AG04450 (cell line): ENCODE measurements at regions of chrX and their contacts with region 1.

Region 1: GRCh38 chrX:134528960-134529359 is 69.0 kb downstream of the HPRT1 start:
- DNase-seq: no peak
- H3K4me3 ChIP-seq: no peak overlapping the region
- H3K27ac ChIP-seq: no peak overlapping the region
- H3K27me3 ChIP-seq: no peaks in the 10 kb centered on the region
- CTCF ChIP-seq: no peak

Region 2: DNA sequence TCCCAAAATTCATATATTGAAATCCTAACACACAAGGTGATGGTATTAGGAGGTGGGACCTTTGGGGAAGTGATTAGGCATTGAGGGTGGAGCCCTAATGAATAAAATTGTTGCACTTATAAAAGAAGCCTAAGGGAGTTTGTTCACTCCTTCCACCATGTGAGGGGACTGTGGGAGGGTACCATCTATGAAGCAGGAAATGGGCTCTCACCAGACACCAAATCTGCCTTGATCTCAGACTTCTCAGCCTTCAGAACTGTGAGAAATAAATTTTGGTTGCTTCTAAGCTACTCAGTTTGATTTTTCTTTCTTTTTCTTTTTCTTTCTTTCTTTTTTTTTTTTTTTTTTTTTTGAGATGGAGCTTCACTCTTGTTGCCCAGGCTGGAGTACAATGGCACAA is 427.3 kb before region 1 on chrX:
- CTCF ChIA-PET with region 1: no interaction called
- POLR2A ChIA-PET with region 1: no interaction called
- DNase-seq: no peak
- H3K4me3 ChIP-seq: no peak overlapping the region
- H3K27ac ChIP-seq: no peak overlapping the region
- H3K27me3 ChIP-seq: no peaks in the 10 kb centered on the region
- CTCF ChIP-seq: no peak

Region 3: DNA sequence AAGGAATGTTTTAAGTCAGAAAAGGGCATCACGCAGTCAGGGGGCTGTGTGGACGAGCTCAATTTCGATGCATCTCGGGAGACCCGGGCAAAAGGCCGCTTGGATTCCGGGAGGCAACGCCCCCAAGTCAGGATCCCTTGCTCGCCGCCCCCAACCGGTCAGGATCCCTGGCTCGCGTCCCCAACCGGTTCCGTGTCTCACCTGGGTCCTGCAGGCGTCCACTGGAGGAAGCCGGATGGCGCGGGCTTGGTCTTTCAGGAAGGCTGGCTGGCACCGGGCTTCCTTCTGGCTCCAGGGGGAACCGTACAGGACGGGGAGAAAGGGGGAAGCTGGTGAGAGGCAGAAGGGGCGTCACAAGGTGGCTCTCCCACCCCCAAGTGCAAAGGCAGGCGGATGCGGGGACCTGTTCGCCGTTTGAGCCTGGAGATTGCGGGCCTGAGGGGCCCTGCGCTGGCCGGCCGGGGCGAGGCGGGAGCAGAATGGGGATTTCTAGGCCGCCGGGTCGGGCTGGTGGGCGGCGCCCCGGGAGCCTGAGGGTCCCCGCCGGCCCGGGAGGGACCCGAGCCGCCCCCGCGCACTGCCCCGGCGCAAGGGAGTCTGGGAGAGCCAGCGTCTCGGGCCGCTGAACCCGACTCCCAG is 15.7 kb after region 1 on chrX:
- CTCF ChIA-PET with region 1: no interaction called
- POLR2A ChIA-PET with region 1: interaction called, 13 read pairs
- DNase-seq: no peak
- H3K4me3 ChIP-seq: no peak overlapping the region
- H3K27ac ChIP-seq: peak overlapping the region; percentile 52
- H3K27me3 ChIP-seq: no peaks in the 10 kb centered on the region
- CTCF ChIP-seq: no peak